ENCODE measurements at regions of chr10 and their contacts with region 1.

Region 1: GRCh38 chr10:49407552-49408137 is 11.8 kb upstream of the DRGX start:
- DNase-seq: peak; percentile 87
- ATAC-seq: peak; percentile 75
- H3K4me3 Mint-ChIP-seq: no peak overlapping the region
- H3K27ac Mint-ChIP-seq: no peak overlapping the region
- H3K4me1 Mint-ChIP-seq: peaks cover 33% of the 10 kb centered on the region
- H3K27me3 Mint-ChIP-seq: peaks cover 23% of the 10 kb centered on the region
- CTCF ChIP-seq: peak; percentile 79

Region 2: GRCh38 chr10:49094673-49095072 is 313.0 kb before region 1 on chr10:
- CTCF ChIA-PET with region 1: no interaction called
- POLR2A ChIA-PET with region 1: no interaction called
- DNase-seq: no peak
- ATAC-seq: no peak
- H3K4me3 Mint-ChIP-seq: no peak overlapping the region
- H3K27ac Mint-ChIP-seq: no peak overlapping the region
- H3K4me1 Mint-ChIP-seq: peaks cover 3% of the 10 kb centered on the region; the same call in 1 of the 2 replicates
- H3K27me3 Mint-ChIP-seq: no peaks in the 10 kb centered on the region
- CTCF ChIP-seq: no peak

Region 3: GRCh38 chr10:49324711-49325110 is 82.9 kb before region 1 on chr10:
- CTCF ChIA-PET with region 1: interaction called, 44 read pairs
- POLR2A ChIA-PET with region 1: no interaction called
- DNase-seq: peak; percentile 54
- ATAC-seq: peak; percentile 52; the same call in 1 of the 2 replicates
- H3K4me3 Mint-ChIP-seq: no peak overlapping the region
- H3K27ac Mint-ChIP-seq: no peak overlapping the region
- H3K4me1 Mint-ChIP-seq: peaks cover 5% of the 10 kb centered on the region
- H3K27me3 Mint-ChIP-seq: no peaks in the 10 kb centered on the region
- CTCF ChIP-seq: no peak

Region 4: GRCh38 chr10:49365675-49366415 is 41.8 kb before region 1 on chr10:
- CTCF ChIA-PET with region 1: interaction called, 15 read pairs
- POLR2A ChIA-PET with region 1: no interaction called
- DNase-seq: no peak
- ATAC-seq: peak; percentile 43
- H3K4me3 Mint-ChIP-seq: no peak overlapping the region
- H3K27ac Mint-ChIP-seq: no peak overlapping the region
- H3K4me1 Mint-ChIP-seq: peaks cover 13% of the 10 kb centered on the region
- H3K27me3 Mint-ChIP-seq: no peaks in the 10 kb centered on the region
- CTCF ChIP-seq: no peak

Region 5: DNA sequence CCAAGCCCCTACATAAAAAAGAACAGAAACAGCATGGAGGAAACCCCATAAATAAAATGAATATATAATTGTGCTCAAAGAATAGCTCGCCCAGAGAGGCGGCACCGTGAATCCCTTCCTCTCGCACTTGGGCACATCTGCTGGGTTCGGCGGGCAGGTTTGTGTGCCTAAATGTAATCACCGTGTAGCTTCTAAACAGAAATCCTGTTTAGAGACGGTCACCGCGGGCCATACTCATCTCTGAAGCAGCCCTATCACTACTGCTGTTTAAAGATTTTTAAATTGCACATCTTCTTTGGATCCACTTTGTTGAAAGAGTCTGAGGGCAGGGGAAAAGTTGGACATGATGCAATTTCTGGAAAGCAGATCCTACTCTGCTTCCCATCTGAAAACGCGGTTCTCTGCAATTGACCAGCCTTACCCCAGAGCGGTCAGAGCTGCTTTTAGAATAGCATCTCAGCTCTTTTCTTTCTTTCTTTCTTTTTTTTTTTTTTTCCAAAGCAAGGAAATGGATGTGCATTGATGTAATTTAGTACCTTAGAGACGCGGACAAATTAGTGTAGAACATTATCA is 18.2 kb before region 1 on chr10:
- CTCF ChIA-PET with region 1: interaction called, 36 read pairs
- POLR2A ChIA-PET with region 1: no interaction called
- DNase-seq: no peak
- ATAC-seq: no peak
- H3K4me3 Mint-ChIP-seq: no peak overlapping the region
- H3K27ac Mint-ChIP-seq: no peak overlapping the region
- H3K4me1 Mint-ChIP-seq: 0 out of 2 replicates have a peak, but pooled peaks cover 6% of the 10 kb centered on the region
- H3K27me3 Mint-ChIP-seq: peaks cover 43% of the 10 kb centered on the region
- CTCF ChIP-seq: no peak

Region 6: GRCh38 chr10:49500418-49500817 is 92.8 kb after region 1 on chr10:
- CTCF ChIA-PET with region 1: interaction called, 24 read pairs
- POLR2A ChIA-PET with region 1: no interaction called
- DNase-seq: no peak
- ATAC-seq: peak; percentile 18; the same call in 1 of the 2 replicates
- H3K4me3 Mint-ChIP-seq: no peak overlapping the region
- H3K27ac Mint-ChIP-seq: no peak overlapping the region
- H3K4me1 Mint-ChIP-seq: peaks cover 13% of the 10 kb centered on the region
- H3K27me3 Mint-ChIP-seq: no peaks in the 10 kb centered on the region
- CTCF ChIP-seq: no peak

Region 7: GRCh38 chr10:49518982-49519578 is 111.4 kb after region 1 on chr10:
- CTCF ChIA-PET with region 1: interaction called, 144 read pairs
- POLR2A ChIA-PET with region 1: no interaction called
- DNase-seq: peak; percentile 24
- ATAC-seq: peak; percentile 80
- H3K4me3 Mint-ChIP-seq: no peak overlapping the region
- H3K27ac Mint-ChIP-seq: no peak overlapping the region
- H3K4me1 Mint-ChIP-seq: peaks cover 22% of the 10 kb centered on the region
- H3K27me3 Mint-ChIP-seq: no peaks in the 10 kb centered on the region
- CTCF ChIP-seq: peak; percentile 64

Measured in WTC11 (cell line).